ENCODE measurements at regions of chr15 and their contacts with region 1.

Region 1: GRCh38 chr15:78872972-78873792 is 492 bp downstream of the MORF4L1 start:
- DNase-seq: peak; percentile 92
- H3K4me3 Mint-ChIP-seq: peak overlapping the region; percentile 100
- H3K27ac Mint-ChIP-seq: peak overlapping the region; percentile 100
- H3K4me1 Mint-ChIP-seq: peaks cover 34% of the 10 kb centered on the region
- H3K27me3 Mint-ChIP-seq: no peaks in the 10 kb centered on the region

Region 2: GRCh38 chr15:78540141-78540928 is 332.8 kb before region 1 on chr15 and contains the start of gene PSMA4:
- CTCF ChIA-PET with region 1: no interaction called
- intact Hi-C with region 1: loop called (anchors 5 kb)
- DNase-seq: peak; percentile 94
- H3K4me3 Mint-ChIP-seq: peak within 1 kb of the TSS; percentile 84
- H3K27ac Mint-ChIP-seq: peak within 1 kb of the TSS; percentile 90
- H3K4me1 Mint-ChIP-seq: peaks cover 23% of the 10 kb centered on the region
- H3K27me3 Mint-ChIP-seq: no peaks in the 10 kb centered on the region
- total RNA-seq, gene PSMA4: 306 to 310 TPM

Region 3: DNA sequence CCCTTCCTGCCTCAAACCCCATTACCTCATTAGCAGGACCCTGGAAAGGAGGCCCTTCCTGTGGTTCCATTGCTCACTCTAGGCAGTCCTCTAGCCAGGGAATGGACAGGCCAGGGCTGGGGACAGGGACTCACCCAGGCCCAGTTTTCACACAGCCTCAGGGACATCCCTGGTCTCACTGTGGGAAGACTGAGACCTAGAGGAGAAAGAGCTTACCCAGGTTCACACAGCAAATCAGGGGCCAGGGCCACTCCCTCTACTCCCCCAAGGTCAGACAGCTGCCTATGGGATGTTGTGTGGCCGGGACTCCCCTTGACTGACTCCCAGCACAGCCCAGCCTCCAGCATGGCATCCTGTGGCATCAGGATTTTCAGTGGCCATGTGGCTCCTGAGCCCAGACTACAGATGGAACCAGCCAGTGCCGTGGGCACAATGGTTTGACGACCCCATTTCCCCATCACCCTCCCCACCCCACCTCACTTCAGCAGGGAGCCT is 111.2 kb before region 1 on chr15:
- CTCF ChIA-PET with region 1: no interaction called
- intact Hi-C with region 1: loop called (anchors 5 kb)
- DNase-seq: no peak
- H3K4me3 Mint-ChIP-seq: peak overlapping the region; percentile 54
- H3K27ac Mint-ChIP-seq: peak overlapping the region; percentile 89
- H3K4me1 Mint-ChIP-seq: peaks cover 24% of the 10 kb centered on the region
- H3K27me3 Mint-ChIP-seq: no peaks in the 10 kb centered on the region

Region 4: GRCh38 chr15:78859971-78860732 is 13.0 kb before region 1 on chr15:
- CTCF ChIA-PET with region 1: interaction called, 4 read pairs
- intact Hi-C with region 1: loop called (anchors 1 kb)
- DNase-seq: peak; percentile 79
- H3K4me3 Mint-ChIP-seq: peak overlapping the region; percentile 80
- H3K27ac Mint-ChIP-seq: peak overlapping the region; percentile 66
- H3K4me1 Mint-ChIP-seq: peaks cover 9% of the 10 kb centered on the region
- H3K27me3 Mint-ChIP-seq: no peaks in the 10 kb centered on the region

Region 5: DNA sequence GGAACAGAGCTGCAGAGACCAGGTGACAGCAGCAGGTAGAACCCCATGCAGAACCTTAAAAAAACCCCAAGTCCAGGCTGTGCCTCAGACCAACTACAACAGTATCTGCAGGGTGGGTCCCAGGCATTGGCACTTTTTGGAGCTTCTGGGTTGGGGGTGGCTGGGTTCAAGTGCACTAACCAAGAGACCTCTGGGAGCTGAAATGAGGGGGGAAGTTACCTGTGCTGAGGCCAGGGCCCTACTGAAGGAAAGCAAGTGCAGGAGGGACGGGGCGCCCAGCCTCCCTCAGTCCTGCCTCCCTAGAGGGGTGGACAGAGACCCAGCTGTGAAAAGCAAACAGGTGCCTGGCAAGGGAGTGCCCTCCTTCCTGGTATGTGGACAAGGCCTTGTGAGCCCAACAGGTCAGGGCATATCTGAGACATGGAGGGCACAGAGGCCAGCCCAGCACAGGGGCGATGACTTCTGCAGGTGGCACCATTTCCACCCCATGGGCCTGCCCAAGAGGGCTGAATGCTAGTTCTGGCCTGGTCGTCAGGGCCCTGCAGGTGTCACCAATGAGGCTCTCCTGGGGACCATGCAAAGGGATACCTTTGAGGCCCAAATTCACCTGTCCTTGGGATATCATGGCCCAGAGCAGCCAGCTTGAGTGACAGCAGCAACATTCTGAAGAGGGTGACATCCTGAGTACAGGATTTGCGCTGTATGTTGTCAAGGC is 52.9 kb after region 1 on chr15:
- CTCF ChIA-PET with region 1: no interaction called
- intact Hi-C with region 1: no loop called
- DNase-seq: no peak
- H3K4me3 Mint-ChIP-seq: no peak overlapping the region
- H3K27ac Mint-ChIP-seq: no peak overlapping the region
- H3K4me1 Mint-ChIP-seq: no peaks in the 10 kb centered on the region
- H3K27me3 Mint-ChIP-seq: no peaks in the 10 kb centered on the region

Measured in activated naive CD4-positive, alpha-beta T cell treated with anti-CD3 and anti-CD28 coated beads for 36 hours (primary cell).